ENCODE measurements at regions of chr17 and their contacts with region 1.

Region 1: GRCh38 chr17:78324391-78325075 is 35.3 kb downstream of the SOCS3 start:
- DNase-seq: peak; percentile 77
- H3K4me3 ChIP-seq: no peak overlapping the region
- H3K27me3 ChIP-seq: no peaks in the 10 kb centered on the region
- CTCF ChIP-seq: no peak

Region 2: DNA sequence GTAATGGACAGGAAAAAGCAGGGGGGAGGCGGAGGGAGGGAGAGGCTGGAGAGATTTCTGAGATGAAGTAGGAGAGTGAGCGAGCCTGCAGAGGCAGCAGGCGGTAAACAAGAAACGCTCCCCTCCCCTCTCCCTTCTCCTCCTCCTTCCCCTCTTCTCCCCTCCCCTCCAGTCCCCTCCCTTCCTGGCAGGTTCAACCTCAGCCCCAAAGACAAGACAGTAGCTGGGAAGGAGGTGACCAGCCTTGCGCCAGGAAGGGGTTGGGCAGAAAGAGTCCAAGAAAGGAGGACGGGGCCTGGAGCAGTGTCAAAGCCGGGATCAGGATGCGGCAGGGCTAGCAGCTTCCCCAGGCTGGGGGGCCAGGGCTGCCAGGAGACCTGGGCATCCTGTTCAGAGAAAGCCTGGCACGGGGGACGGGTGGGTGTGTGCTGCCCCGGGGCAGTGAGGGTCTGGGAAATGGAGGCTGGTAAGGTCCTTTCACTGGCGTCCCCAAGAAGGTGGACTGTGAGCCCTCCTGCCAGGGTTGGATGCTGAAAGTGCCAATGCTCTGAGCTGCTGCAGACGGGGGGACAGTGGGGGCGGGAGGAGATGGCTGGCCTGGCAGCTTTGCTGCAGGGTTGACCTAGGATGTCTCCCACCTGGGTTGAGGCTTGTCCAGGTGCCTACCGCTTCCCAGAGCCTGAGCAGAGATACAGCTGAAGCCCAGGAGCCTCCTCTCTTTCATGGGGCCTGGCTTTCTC is 627.6 kb before region 1 on chr17:
- CTCF ChIA-PET with region 1: no interaction called
- POLR2A ChIA-PET with region 1: no interaction called
- DNase-seq: no peak
- H3K4me3 ChIP-seq: no peak overlapping the region
- H3K27me3 ChIP-seq: peaks cover 8% of the 10 kb centered on the region
- CTCF ChIP-seq: no peak

Region 3: GRCh38 chr17:78300962-78301822 is 23.3 kb before region 1 on chr17:
- CTCF ChIA-PET with region 1: no interaction called
- POLR2A ChIA-PET with region 1: interaction called, 12 read pairs
- DNase-seq: no peak
- H3K4me3 ChIP-seq: no peak overlapping the region
- H3K27me3 ChIP-seq: no peaks in the 10 kb centered on the region
- CTCF ChIP-seq: no peak

Region 4: DNA sequence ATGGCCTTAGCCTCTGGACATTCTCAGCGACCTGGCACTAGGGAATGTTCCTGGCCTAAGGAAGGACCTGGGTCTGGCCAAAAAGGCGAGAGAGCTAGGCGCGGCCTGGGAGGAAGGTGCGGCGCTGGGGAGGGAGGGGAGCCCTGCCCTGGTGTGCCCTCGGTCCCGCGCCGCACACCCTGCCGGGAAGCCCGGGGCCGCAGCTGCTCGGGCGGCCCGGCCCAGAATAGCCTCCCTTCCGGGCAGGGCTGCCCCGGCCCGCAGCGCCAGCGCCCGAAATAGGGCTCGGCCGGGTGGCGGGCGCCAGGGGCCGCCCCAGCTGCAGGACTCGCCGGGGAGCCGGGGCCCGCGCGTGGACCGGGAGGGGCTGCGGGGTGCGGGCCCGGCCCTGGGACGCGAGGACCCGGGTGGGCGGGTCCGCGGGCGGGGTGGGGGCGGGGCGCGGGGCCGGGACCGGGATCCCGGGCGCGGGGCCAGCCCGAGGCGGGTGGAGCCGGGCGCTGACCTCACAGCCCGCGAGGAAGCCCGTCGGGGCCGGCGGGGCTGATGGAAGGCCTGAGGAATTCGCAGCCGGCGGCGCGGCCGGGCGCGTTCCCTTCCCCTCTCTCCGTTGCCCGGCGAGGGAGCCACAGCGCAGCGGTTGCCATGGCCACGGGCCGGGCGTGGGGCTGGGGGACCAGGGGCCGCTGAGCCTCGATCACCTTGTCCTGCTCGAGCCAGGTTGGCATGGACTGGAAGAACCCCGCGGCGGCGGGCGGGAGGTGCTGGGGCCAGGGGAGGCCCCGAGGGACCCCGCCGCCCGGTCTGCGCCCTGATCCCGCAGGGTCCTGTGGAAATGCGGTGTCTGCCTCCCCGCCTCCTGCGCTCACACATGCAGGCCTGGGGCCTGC is 17.3 kb after region 1 on chr17:
- CTCF ChIA-PET with region 1: interaction called, 5 read pairs
- POLR2A ChIA-PET with region 1: interaction called, 16 read pairs
- DNase-seq: no peak
- H3K4me3 ChIP-seq: peak overlapping the region; percentile 44
- H3K27me3 ChIP-seq: no peaks in the 10 kb centered on the region
- CTCF ChIP-seq: no peak

Measured in BJ (cell line).